ENCODE measurements at regions of chr10 and their contacts with region 1.

Region 1: GRCh38 chr10:101214446-101215396 is 14.5 kb downstream of the LBX1 start:
- DNase-seq: peak; percentile 73
- H3K4me3 Mint-ChIP-seq: peak overlapping the region; percentile 65
- H3K27ac Mint-ChIP-seq: no peak overlapping the region
- H3K4me1 Mint-ChIP-seq: peaks cover 6% of the 10 kb centered on the region
- H3K27me3 Mint-ChIP-seq: peaks cover 87% of the 10 kb centered on the region
- CTCF ChIP-seq: peak; percentile 62

Region 2: GRCh38 chr10:101161494-101162299 is 53.0 kb before region 1 on chr10:
- CTCF ChIA-PET with region 1: no interaction called
- intact Hi-C with region 1: loop called (anchors 5 kb)
- DNase-seq: peak; percentile 58
- H3K4me3 Mint-ChIP-seq: peak overlapping the region; percentile 28
- H3K27ac Mint-ChIP-seq: no peak overlapping the region
- H3K4me1 Mint-ChIP-seq: peaks cover 16% of the 10 kb centered on the region
- H3K27me3 Mint-ChIP-seq: peaks cover 90% of the 10 kb centered on the region
- CTCF ChIP-seq: peak; percentile 81

Region 3: GRCh38 chr10:101291331-101292193 is 76.8 kb after region 1 on chr10:
- CTCF ChIA-PET with region 1: interaction called, 19 read pairs
- intact Hi-C with region 1: loop called (anchors 2 kb)
- DNase-seq: peak; percentile 51
- H3K4me3 Mint-ChIP-seq: peak overlapping the region; percentile 58
- H3K27ac Mint-ChIP-seq: no peak overlapping the region
- H3K4me1 Mint-ChIP-seq: peaks cover 9% of the 10 kb centered on the region
- H3K27me3 Mint-ChIP-seq: peaks cover 85% of the 10 kb centered on the region
- CTCF ChIP-seq: peak; percentile 57

Region 4: DNA sequence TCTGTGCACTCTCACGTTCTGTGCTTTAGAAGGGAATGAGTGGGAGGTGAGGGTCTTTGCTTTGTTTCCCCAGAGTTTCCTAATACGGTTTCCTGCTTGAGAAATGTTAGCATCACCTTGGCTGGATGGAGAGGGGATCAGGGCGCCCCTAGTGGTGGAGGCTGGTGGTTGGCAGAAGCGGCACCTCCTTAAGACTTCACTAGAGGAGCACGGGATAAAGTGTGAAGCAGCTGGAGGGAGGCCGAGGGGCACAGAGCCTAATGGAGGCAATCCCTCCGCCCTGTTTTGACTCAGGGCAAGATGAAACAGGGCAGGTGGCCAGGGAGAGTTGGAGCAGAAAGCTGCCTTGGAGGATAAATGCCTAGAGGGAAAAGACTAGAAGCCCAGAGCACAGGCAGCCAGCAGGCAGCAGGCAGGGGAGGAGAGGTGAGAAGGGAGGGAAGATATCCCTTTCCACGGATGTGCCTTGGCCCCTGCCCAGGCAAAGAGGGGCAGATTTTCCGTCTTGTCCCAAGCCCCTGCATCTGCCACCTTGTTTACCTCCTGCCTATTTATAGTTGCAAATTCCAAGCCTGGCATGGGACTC is 83.3 kb after region 1 on chr10:
- CTCF ChIA-PET with region 1: interaction called, 19 read pairs
- intact Hi-C with region 1: loop called (anchors 2 kb)
- DNase-seq: peak; percentile 75
- H3K4me3 Mint-ChIP-seq: no peak overlapping the region
- H3K27ac Mint-ChIP-seq: no peak overlapping the region
- H3K4me1 Mint-ChIP-seq: peaks cover 18% of the 10 kb centered on the region
- H3K27me3 Mint-ChIP-seq: peaks cover 90% of the 10 kb centered on the region
- CTCF ChIP-seq: peak; percentile 72

Region 5: GRCh38 chr10:101353692-101354327 is 139.1 kb after region 1 on chr10 and contains the start of gene BTRC:
- CTCF ChIA-PET with region 1: no interaction called
- intact Hi-C with region 1: no loop called
- DNase-seq: peak; percentile 90
- H3K4me3 Mint-ChIP-seq: peak within 1 kb of the TSS; percentile 95
- H3K27ac Mint-ChIP-seq: peak within 1 kb of the TSS; percentile 74
- H3K4me1 Mint-ChIP-seq: peaks cover 18% of the 10 kb centered on the region
- H3K27me3 Mint-ChIP-seq: peaks cover 23% of the 10 kb centered on the region
- CTCF ChIP-seq: no peak
- total RNA-seq, gene BTRC: 7.9 and 10.8 TPM in 2 replicates

Region 6: GRCh38 chr10:101441541-101442455 is 227.1 kb after region 1 on chr10:
- CTCF ChIA-PET with region 1: interaction called, 5 read pairs
- intact Hi-C with region 1: loop called (anchors 5 kb)
- DNase-seq: peak; percentile 20
- H3K4me3 Mint-ChIP-seq: no peak overlapping the region
- H3K27ac Mint-ChIP-seq: no peak overlapping the region
- H3K4me1 Mint-ChIP-seq: no peaks in the 10 kb centered on the region
- H3K27me3 Mint-ChIP-seq: no peaks in the 10 kb centered on the region
- CTCF ChIP-seq: peak; percentile 39

Region 7: GRCh38 chr10:101467286-101467770 is 252.6 kb after region 1 on chr10:
- CTCF ChIA-PET with region 1: interaction called, 11 read pairs
- intact Hi-C with region 1: no loop called
- DNase-seq: peak; percentile 25
- H3K4me3 Mint-ChIP-seq: no peak overlapping the region
- H3K27ac Mint-ChIP-seq: no peak overlapping the region
- H3K4me1 Mint-ChIP-seq: no peaks in the 10 kb centered on the region
- H3K27me3 Mint-ChIP-seq: no peaks in the 10 kb centered on the region
- CTCF ChIP-seq: peak; percentile 37

Region 8: DNA sequence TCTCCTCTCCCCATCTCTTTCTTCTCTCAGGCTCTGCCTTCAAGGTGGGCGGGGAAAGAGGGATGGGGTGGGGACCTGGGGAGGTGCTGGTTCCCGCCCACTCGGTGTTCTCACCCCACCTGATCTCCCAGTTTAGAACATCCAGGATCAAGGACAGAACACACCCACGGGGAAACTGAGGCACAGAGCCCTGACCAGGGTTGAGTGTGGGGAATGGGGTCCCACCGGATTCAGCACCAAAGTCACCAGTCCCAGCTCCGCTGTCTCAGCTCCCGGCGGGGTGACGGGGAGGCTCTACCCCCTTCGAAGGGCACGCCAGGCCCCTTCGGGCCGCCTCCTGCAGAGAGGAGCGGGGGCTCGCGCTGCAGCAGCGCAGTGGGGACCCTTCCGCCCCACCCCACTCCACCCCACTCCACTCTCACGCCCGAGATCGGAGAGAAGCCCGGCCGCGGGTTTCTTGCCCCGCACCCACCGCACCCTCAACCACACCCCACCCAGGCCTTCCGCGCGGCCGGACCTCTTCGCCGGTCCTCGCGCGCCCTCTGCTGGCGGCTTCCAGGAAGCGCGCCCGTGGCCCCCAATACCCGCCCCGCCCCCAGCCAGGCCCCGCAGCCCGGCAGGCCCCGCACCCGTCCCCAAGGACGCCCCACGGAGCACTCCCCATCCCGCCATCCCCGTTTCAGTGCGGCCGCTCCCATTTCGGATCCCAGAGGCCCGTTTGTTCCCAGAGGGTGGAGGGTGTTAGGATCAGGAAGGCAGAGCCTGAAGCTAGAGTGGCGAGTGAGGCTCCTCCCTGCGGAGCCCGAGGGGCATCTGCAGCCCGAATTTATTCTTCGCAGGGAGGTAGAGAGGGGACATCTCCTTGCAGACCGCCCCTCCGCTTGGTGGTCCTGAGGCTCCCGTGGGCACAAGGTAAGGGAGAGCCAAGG is 355.4 kb after region 1 on chr10:
- CTCF ChIA-PET with region 1: interaction called, 6 read pairs
- intact Hi-C with region 1: loop called (anchors 5 kb)
- DNase-seq: peak; percentile 76
- H3K4me3 Mint-ChIP-seq: peak overlapping the region; percentile 75
- H3K27ac Mint-ChIP-seq: no peak overlapping the region
- H3K4me1 Mint-ChIP-seq: no peaks in the 10 kb centered on the region
- H3K27me3 Mint-ChIP-seq: peaks cover 63% of the 10 kb centered on the region
- CTCF ChIP-seq: peak; percentile 85

Measured in Calu3 (cell line).